Aorta (tissue), 5 donors: ENCODE measurements at regions of chr2 and their contacts with region 1.

Region 1: GRCh38 chr2:55268907-55269644 is at the start of gene MTIF2:
- DNase-seq: peak; percentile 98
- ATAC-seq: peak; percentile 98
- H3K4me3 ChIP-seq: peak within 1 kb of the TSS; percentile 15 to 73
- H3K27ac ChIP-seq: peak within 1 kb of the TSS; percentile 52 to 62
- H3K4me1 ChIP-seq: no peaks in the 10 kb centered on the region
- H3K27me3 ChIP-seq: no peaks in the 10 kb centered on the region
- total RNA-seq, gene MTIF2: 13.0 to 18.5 TPM

Region 2: DNA sequence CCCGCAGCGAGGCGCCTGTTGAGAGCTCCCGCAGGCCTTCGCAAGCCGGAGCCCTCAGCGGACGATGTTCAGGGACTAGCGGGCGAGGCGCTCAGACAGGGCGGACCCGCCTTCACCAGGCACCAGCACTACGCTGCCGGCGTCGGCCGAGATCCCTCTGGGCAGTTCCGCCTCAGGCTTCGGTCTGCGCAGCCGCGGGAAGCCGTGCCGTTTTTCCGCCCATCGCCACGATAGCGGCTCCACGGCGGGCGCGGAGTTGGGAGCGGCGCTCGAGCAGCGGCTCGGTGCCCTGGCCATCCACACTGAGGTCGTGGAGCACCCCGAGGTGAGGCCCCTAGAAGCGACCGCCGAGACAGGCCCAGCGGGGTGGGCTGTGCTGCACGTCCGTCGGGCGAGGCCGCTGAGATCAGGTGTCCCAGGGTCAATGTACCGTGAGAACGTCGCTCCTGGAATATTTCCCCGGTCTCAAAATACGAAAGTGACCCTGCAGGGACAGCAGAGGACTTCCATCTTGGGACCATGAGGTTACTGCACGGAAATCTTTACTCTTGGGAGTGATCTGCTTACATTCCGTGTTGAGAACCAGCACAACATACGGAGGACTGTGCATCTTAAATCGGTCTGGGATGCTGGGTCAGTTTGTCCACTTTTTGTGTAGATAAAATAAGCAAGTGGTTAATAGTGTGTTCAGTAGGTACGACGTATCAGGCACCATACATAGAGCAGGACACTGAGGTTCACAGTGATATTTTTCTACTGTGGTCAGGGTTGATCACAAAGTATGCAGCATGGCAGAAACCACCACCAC is 13.2 kb after region 1 on chr2:
- intact Hi-C with region 1: no loop called
- DNase-seq: peak; percentile 95 to 98
- ATAC-seq: peak; percentile 99
- H3K4me3 ChIP-seq: peak overlapping the region; percentile 43 to 46
- H3K27ac ChIP-seq: peak overlapping the region; percentile 45 to 88
- H3K4me1 ChIP-seq: no peaks in the 10 kb centered on the region
- H3K27me3 ChIP-seq: no peaks in the 10 kb centered on the region

Region 3: GRCh38 chr2:55431982-55432627 is 163.0 kb after region 1 on chr2:
- intact Hi-C with region 1: loop called (anchors 5 kb)
- DNase-seq: no peak
- ATAC-seq: peak; percentile 76
- H3K4me3 ChIP-seq: no peak overlapping the region
- H3K27ac ChIP-seq: no peak overlapping the region
- H3K4me1 ChIP-seq: peaks cover 0 to 2% of the 10 kb centered on the region in 2 donors
- H3K27me3 ChIP-seq: no peaks in the 10 kb centered on the region